GM13976 (cell line): ENCODE measurements at regions of chrX and their contacts with region 1.

Region 1: GRCh38 chrX:68196939-68197791 is 236.1 kb downstream of the OPHN1 start:
- DNase-seq: peak; percentile 32
- CTCF ChIP-seq: peak; percentile 58

Region 2: DNA sequence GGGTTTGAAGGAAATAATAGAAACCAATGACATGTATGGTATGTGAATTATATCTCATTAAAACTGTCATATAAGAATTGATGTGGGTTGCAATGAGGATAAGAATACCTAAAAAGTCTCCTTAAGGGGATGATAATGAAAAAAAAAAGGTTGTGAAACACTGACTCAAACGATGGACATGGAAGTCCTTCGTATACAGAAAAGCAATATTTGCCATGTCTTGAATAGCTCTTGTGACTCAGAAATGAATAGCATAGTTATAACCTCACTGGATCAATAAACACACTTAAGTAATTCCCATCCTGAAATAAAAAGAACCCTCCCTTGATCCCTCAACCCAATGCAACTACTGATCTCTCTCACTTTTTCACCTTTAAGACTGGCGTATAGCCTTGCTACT is 146.4 kb after region 1 on chrX:
- in situ Hi-C with region 1: no loop called
- DNase-seq: no peak
- CTCF ChIP-seq: no peak

Region 3: DNA sequence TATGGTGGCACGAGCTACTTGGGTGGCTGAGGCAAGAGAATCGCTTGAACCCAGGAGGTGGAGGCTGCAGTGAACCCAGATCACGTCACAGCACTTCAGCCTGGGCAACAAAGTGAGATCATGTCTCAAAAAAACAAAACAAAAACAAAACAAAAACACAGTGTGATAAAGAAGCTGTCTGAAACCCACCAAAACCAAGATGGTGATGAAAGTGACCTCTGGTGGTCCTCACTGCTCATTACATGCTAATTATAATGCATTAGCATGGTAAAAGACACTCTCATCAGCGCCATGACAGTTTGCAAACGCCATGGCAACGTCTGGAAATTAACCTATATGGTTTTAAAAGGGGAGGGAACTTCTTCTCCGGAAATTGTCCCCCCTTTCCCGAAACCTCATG is 265.5 kb after region 1 on chrX:
- in situ Hi-C with region 1: loop called (anchors 25 kb)
- DNase-seq: no peak
- CTCF ChIP-seq: no peak

Region 4: DNA sequence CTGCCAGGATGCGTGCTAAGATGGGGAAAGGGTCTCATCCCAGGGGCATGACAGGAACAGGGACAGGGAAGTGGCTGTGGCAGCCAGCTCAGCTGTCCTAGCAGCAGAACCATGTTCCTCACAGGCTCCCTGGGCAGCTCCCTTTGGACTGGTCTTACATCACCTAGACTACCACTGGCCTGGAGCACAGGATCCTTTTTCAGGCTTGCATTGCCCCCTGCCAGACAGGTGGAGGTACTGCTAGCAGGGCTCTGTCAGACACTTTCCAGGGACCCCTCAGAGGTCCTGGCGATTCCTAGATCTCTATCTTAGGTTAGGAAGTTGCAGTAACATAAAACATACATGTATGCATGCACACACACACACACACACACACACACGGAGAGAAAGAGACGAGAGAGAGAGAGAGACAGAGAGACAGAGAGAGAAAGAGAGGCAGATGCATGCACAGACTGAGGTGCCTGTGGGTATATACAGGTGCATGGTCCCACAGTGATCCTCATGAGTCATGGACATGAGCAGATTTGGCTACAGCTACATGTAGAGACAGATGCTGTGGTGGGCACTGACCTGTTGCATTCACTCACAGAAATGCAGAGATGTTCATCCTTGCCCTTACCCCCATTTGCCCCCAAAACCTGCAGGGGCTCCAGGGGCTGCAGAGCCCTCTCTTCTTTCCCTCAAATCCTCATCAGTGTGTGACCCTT is 513.9 kb after region 1 on chrX:
- in situ Hi-C with region 1: loop called (anchors 25 kb)
- DNase-seq: peak; percentile 55
- CTCF ChIP-seq: peak; percentile 47